GM12878 (cell line): ENCODE measurements at regions of chr4 and their contacts with region 1.

Region 1: GRCh38 chr4:163367651-163368050 is 24.0 kb downstream of the NPY5R start:
- DNase-seq: no peak
- ATAC-seq: no peak
- H3K4me3 ChIP-seq: no peak overlapping the region
- H3K27ac ChIP-seq: no peak overlapping the region
- H3K4me1 ChIP-seq: no peaks in the 10 kb centered on the region
- H3K27me3 ChIP-seq: no peaks in the 10 kb centered on the region
- CTCF ChIP-seq: no peak
- EP300 ChIP-seq: no peak
- POLR2A ChIP-seq: no peak
- RAD21 ChIP-seq: no peak

Region 2: GRCh38 chr4:163378661-163379060 is 11.0 kb after region 1 on chr4:
- CTCF ChIA-PET with region 1: interaction called, 4 read pairs
- POLR2A ChIA-PET with region 1: no interaction called
- RAD21 ChIA-PET with region 1: no interaction called
- SMC1A ChIA-PET with region 1: interaction called, 3 read pairs
- in situ Hi-C with region 1: no loop called
- intact Hi-C with region 1: loop called (anchors 1 kb)
- DNase-seq: no peak
- ATAC-seq: no peak
- H3K4me3 ChIP-seq: no peak overlapping the region
- H3K27ac ChIP-seq: no peak overlapping the region
- H3K4me1 ChIP-seq: no peaks in the 10 kb centered on the region
- H3K27me3 ChIP-seq: no peaks in the 10 kb centered on the region
- CTCF ChIP-seq: no peak
- EP300 ChIP-seq: no peak
- POLR2A ChIP-seq: no peak
- RAD21 ChIP-seq: no peak